Panc1 (cell line): ENCODE measurements at regions of chr16 and their contacts with region 1.

Region 1: GRCh38 chr16:15592324-15592723 is 50.6 kb downstream of the MARF1 start:
- DNase-seq: no peak
- ATAC-seq: no peak
- H3K4me3 ChIP-seq: no peak overlapping the region
- H3K27ac ChIP-seq: peak overlapping the region; percentile 81
- H3K4me1 ChIP-seq: peaks cover 29% of the 10 kb centered on the region
- H3K27me3 ChIP-seq: no peaks in the 10 kb centered on the region
- CTCF ChIP-seq: no peak

Region 2: DNA sequence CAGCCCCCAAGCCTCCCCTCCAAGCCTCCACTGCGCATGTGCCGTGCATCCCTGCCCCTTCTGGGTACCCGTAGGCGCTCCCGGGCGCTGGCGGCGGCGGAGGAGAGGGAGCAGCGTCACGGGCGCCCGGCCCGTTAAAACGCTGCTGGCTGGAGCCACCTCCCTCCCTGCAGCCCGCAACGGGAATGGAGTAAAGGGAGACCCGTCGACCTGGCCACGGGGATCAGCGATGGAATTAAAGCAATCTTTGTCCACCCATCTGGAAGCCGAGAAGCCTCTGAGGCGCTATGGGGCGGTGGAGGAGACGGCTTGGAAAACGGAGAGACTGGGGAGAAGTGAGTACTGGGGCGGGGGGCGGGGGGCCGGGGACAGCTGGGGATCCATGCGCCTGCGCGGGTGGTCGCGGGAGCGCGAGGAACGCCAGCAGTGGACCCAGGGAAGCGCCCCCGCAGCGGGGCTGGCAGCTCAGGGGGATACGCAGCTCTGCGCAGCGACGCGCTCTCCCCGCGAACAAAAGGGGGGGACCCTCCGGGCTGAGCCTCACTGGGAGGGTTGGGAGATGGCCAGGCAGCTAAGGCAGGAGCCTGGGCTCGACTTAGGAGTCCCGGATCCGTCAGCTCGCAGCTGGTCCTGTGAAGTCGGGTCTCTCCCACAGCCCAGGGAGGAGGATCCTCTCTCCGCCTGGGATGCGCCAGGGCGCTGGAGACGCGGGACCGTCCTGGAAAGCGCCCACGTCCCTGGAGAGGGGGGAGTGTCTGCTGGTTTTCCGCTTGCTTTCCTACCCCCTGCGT is 157.7 kb before region 1 on chr16 and contains the start of gene BMERB1:
- CTCF ChIA-PET with region 1: no interaction called
- POLR2A ChIA-PET with region 1: interaction called, 9 read pairs
- in situ Hi-C with region 1: no loop called
- intact Hi-C with region 1: loop called (anchors 10 kb)
- DNase-seq: no peak
- ATAC-seq: peak; percentile 93
- H3K4me3 ChIP-seq: peak within 1 kb of the TSS; percentile 71 to 81
- H3K27ac ChIP-seq: peak within 1 kb of the TSS; percentile 84
- H3K4me1 ChIP-seq: peaks cover 32% of the 10 kb centered on the region
- H3K27me3 ChIP-seq: no peaks in the 10 kb centered on the region
- CTCF ChIP-seq: no peak
- total RNA-seq, gene BMERB1: 80.0 TPM

Region 3: DNA sequence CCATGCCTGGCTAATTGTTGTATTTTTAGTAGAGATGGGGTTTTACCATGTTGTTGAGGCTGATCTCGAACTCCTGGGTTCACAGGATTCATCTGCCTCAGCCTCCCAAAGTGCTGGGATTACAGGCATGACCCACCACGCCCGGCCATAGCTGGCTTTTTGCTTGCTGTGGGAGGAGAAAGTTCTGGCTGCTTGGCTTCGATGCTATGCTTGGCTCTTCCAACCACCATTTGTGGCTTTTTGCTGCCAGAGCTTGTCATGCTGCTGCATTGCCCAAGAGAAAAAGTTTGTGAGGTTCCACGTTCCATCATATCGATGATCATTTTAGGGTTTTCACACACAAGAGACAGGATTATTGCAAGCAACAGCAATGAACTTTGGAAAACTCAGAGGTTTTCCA is 141.7 kb before region 1 on chr16:
- CTCF ChIA-PET with region 1: no interaction called
- POLR2A ChIA-PET with region 1: no interaction called
- in situ Hi-C with region 1: no loop called
- intact Hi-C with region 1: no loop called
- DNase-seq: no peak
- ATAC-seq: no peak
- H3K4me3 ChIP-seq: no peak overlapping the region
- H3K27ac ChIP-seq: no peak overlapping the region
- H3K4me1 ChIP-seq: no peaks in the 10 kb centered on the region
- H3K27me3 ChIP-seq: no peaks in the 10 kb centered on the region
- CTCF ChIP-seq: no peak

Region 4: GRCh38 chr16:15643048-15643945 is 51.0 kb after region 1 on chr16 and contains the start of gene MARF1:
- CTCF ChIA-PET with region 1: no interaction called
- POLR2A ChIA-PET with region 1: interaction called, 5 read pairs
- in situ Hi-C with region 1: no loop called
- intact Hi-C with region 1: loop called (anchors 5 kb)
- DNase-seq: peak; percentile 67
- ATAC-seq: peak; percentile 84
- H3K4me3 ChIP-seq: peak within 1 kb of the TSS; percentile 68 to 82
- H3K27ac ChIP-seq: peak within 1 kb of the TSS; percentile 99
- H3K4me1 ChIP-seq: peaks cover 46% of the 10 kb centered on the region
- H3K27me3 ChIP-seq: no peaks in the 10 kb centered on the region
- CTCF ChIP-seq: peak; percentile 75
- total RNA-seq, gene MARF1: 51.5 TPM